Gastrocnemius medialis (tissue), 4 donors: ENCODE measurements at regions of chr10 and their contacts with region 1.

Region 1: DNA sequence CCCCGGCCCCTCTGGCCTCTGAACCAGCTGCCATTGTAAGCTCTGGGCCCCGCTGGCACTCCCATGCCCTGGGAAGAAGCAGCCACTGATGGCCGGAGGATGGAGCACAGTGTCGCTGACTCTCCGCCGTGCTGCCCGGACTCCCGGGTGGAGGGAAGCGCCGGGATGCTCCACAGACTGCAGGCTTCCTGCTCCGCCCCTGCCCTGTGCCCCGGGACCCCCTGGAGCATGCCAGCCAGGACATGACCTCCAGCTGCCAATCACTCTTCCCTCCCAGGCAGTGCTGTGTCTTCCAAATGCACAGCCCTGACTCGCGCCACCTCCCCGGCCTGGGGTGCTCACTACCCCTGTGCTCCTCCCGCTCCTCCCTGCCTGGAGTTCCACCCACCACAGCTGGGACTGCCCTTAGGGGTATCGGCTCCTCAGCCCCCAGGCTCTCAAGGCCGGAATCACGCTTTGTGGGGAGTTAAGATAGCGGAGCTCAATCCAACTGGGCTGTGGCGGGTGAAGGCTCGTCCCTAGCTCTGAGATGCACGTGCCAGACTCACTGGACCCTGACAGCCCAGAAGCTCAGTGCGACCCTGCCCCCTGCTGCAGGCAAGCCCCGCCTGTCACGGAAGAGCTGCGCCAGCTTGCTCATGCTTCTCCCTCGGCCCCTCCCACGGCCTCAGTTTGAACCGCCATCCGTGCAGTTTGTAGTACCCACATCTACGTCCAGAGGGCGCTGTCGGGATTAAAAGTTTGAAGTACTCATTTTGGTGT is 142.3 kb upstream of the TCERG1L start:
- DNase-seq: peak in 1 of 2 donors; percentile 33
- ATAC-seq: no peak
- H3K4me3 ChIP-seq: peak overlapping the region in 2 of 4 donors; percentile 9 to 16
- H3K27ac ChIP-seq: no peak overlapping the region
- H3K4me1 ChIP-seq: no peaks in the 10 kb centered on the region
- H3K27me3 ChIP-seq: peaks cover 8 to 16% (median 9%) of the 10 kb centered on the region in 3 donors
- CTCF ChIP-seq: peak; percentile 40 to 77 (median 70)
- POLR2A ChIP-seq: no peak

Region 2: GRCh38 chr10:131406676-131407392 is 46.9 kb before region 1 on chr10:
- in situ Hi-C with region 1: no loop called
- intact Hi-C with region 1: no loop called
- DNase-seq: no peak
- ATAC-seq: no peak
- H3K4me3 ChIP-seq: no peak overlapping the region
- H3K27ac ChIP-seq: no peak overlapping the region
- H3K4me1 ChIP-seq: no peaks in the 10 kb centered on the region
- H3K27me3 ChIP-seq: peaks cover 0 to 3% (median 0%) of the 10 kb centered on the region in 3 donors
- CTCF ChIP-seq: no peak
- POLR2A ChIP-seq: no peak

Region 3: GRCh38 chr10:131786756-131787605 is 333.2 kb after region 1 on chr10:
- in situ Hi-C with region 1: no loop called
- intact Hi-C with region 1: loop called (anchors 2 kb)
- DNase-seq: no peak
- ATAC-seq: no peak
- H3K4me3 ChIP-seq: no peak overlapping the region
- H3K27ac ChIP-seq: no peak overlapping the region
- H3K4me1 ChIP-seq: no peaks in the 10 kb centered on the region
- H3K27me3 ChIP-seq: no peaks in the 10 kb centered on the region
- CTCF ChIP-seq: peak in 4 of 5 experiments; percentile 48 to 62 (median 52)
- POLR2A ChIP-seq: no peak